A673 (cell line): ENCODE measurements at regions of chr9 and their contacts with region 1.

Region 1: DNA sequence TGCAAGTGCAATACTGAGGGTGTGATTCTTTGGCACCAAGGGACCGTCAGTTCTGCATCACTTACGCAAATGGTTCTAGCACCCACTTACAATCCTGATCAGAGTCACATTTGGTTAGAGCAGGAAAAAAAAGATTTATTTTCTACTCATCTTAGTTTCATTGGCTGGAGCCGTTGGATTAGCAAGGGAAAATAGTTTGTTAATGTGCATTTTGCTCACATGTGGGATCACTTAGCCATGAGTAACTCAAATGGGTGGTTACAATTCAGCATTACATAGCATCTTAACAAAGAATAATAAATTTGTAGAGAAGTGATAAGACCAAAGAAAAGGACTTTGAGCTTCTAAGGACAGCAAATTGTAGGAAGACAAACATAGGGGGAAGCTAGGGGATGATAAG is 216.9 kb downstream of the AUH start:
- DNase-seq: no peak
- H3K4me3 ChIP-seq: no peak overlapping the region
- H3K27ac ChIP-seq: no peak overlapping the region
- H3K4me1 ChIP-seq: no peaks in the 10 kb centered on the region
- H3K27me3 ChIP-seq: no peaks in the 10 kb centered on the region
- CTCF ChIP-seq: no peak

Region 2: DNA sequence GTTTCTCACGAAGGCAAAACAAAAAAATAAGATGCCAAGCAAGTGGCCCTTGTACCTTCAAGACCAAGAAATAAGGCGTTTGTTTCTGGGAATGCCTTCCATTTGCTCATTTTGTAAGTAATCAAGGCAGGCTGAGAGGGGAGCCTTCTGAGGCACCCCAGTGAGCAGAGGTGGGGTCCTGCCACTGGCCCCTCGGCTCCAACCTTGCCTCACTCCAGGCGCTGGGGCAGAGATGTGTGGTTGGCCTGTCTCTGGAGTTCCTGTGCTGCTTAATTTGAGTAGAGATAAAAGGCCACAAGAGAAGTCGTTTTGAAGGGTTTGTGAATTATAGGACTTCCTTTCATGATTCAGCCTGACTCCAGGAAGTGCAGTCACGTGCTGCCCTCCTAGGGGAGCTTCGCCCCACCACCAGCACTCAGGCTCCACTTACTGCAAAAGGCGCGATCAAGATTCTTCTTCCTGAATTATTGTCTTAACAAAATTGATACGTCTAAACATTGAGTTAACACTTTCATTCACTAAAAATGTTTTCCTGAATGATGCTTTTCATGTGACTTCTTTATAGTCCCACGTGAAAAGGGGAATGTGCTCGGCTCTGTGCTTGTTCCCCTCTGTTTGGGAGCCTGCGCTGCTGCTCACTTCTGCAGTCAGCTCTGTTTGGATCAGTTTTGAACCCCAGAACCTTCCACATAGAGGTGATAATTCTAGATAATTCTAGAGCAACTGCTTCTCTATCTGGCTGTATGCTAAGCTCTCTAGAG is 329.4 kb before region 1 on chr9:
- CTCF ChIA-PET with region 1: no interaction called
- POLR2A ChIA-PET with region 1: no interaction called
- intact Hi-C with region 1: no loop called
- DNase-seq: peak; percentile 77
- H3K4me3 ChIP-seq: no peak overlapping the region
- H3K27ac ChIP-seq: peak overlapping the region; percentile 74
- H3K4me1 ChIP-seq: peaks cover 25% of the 10 kb centered on the region
- H3K27me3 ChIP-seq: no peaks in the 10 kb centered on the region
- CTCF ChIP-seq: no peak

Region 3: GRCh38 chr9:90901933-90902332 is 242.8 kb before region 1 on chr9:
- CTCF ChIA-PET with region 1: no interaction called
- POLR2A ChIA-PET with region 1: interaction called, 10 read pairs
- intact Hi-C with region 1: no loop called
- DNase-seq: no peak
- H3K4me3 ChIP-seq: no peak overlapping the region
- H3K27ac ChIP-seq: no peak overlapping the region
- H3K4me1 ChIP-seq: no peaks in the 10 kb centered on the region
- H3K27me3 ChIP-seq: no peaks in the 10 kb centered on the region
- CTCF ChIP-seq: no peak

Region 4: DNA sequence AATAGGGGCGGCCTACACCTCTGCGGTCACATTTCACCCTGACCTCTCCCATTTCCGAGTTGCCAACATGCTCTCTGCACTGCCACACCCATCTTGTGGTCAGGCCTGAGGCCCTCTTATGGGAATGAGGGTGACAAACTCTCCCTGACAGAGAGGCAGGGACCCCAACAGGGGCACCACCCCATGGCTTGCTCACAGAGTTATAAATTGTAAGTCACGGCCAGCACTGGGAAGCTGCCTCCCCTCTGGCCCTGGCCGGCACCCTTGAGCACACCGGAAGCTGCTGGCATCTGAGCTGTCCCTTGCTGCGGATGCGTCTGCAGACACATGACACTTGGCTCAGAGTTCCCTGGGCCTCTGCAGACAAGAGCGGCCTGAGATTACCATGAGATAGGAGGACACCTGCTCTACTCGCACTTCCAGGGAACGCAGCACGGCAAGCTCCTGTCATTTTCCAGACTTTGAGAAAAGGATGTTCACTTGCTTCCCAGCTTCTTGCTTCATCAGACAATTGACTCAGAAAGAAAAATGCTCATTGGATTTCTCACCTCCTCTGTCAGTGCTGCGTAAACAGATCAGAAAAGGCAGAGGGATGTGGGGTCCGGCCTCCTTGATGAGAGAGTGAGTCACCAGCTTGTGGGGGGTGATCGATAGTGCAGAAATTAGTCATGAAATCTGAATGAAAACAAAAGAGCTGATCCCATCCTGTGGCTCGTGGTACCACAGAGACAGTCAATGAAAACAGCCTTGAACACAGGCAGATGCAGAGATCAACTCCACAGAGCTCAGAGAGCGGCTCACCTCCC is 73.4 kb before region 1 on chr9:
- CTCF ChIA-PET with region 1: no interaction called
- POLR2A ChIA-PET with region 1: interaction called, 14 read pairs
- intact Hi-C with region 1: no loop called
- DNase-seq: no peak
- H3K4me3 ChIP-seq: no peak overlapping the region
- H3K27ac ChIP-seq: no peak overlapping the region
- H3K4me1 ChIP-seq: no peaks in the 10 kb centered on the region
- H3K27me3 ChIP-seq: no peaks in the 10 kb centered on the region
- CTCF ChIP-seq: no peak